ENCODE measurements at regions of chrX and their contacts with region 1.

Region 1: GRCh38 chrX:100768679-100769338 is 36.9 kb upstream of the SYTL4 start:
- DNase-seq: peak; percentile 85 to 96 (median 88)
- ATAC-seq: peak; percentile 78
- H3K4me3 ChIP-seq: no peak overlapping the region
- H3K27ac ChIP-seq: no peak overlapping the region
- H3K4me1 ChIP-seq: no peaks in the 10 kb centered on the region
- H3K27me3 ChIP-seq: no peaks in the 10 kb centered on the region
- CTCF ChIP-seq: peak; percentile 95 to 100 (median 99)
- POLR2A ChIP-seq: no peak

Region 2: DNA sequence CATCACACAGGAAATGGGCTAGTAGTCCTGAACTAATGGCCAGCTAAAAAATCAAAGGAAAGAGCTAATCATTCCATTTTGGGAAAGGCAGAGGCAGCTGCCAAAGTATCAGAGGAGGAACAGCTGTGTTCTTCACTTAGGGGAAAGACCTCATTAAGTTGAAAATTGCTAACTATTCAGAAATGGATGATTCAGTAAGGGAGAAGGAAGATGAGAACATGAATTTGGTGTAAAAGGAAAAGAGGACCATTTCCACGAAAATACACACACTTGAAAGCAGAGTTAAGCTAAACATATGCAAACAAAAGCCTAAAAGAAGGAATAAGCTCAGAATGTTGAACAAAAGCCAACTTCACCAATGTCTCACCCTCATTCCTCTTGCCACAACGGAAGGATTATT is 449.1 kb before region 1 on chrX:
- intact Hi-C with region 1: no loop called
- DNase-seq: no peak
- ATAC-seq: no peak
- H3K4me3 ChIP-seq: no peak overlapping the region
- H3K27ac ChIP-seq: no peak overlapping the region
- H3K4me1 ChIP-seq: no peaks in the 10 kb centered on the region
- H3K27me3 ChIP-seq: no peaks in the 10 kb centered on the region
- CTCF ChIP-seq: no peak
- POLR2A ChIP-seq: no peak

Region 3: GRCh38 chrX:100685284-100685996 is 83.4 kb before region 1 on chrX:
- intact Hi-C with region 1: loop called (anchors 5 kb)
- DNase-seq: peak; percentile 73 to 82 (median 76)
- ATAC-seq: peak; percentile 83
- H3K4me3 ChIP-seq: no peak overlapping the region
- H3K27ac ChIP-seq: no peak overlapping the region
- H3K4me1 ChIP-seq: no peaks in the 10 kb centered on the region
- H3K27me3 ChIP-seq: no peaks in the 10 kb centered on the region
- CTCF ChIP-seq: peak; percentile 50 to 98 (median 96)
- POLR2A ChIP-seq: no peak